AG04450 (cell line): ENCODE measurements at regions of chr6 and their contacts with region 1.

Region 1: DNA sequence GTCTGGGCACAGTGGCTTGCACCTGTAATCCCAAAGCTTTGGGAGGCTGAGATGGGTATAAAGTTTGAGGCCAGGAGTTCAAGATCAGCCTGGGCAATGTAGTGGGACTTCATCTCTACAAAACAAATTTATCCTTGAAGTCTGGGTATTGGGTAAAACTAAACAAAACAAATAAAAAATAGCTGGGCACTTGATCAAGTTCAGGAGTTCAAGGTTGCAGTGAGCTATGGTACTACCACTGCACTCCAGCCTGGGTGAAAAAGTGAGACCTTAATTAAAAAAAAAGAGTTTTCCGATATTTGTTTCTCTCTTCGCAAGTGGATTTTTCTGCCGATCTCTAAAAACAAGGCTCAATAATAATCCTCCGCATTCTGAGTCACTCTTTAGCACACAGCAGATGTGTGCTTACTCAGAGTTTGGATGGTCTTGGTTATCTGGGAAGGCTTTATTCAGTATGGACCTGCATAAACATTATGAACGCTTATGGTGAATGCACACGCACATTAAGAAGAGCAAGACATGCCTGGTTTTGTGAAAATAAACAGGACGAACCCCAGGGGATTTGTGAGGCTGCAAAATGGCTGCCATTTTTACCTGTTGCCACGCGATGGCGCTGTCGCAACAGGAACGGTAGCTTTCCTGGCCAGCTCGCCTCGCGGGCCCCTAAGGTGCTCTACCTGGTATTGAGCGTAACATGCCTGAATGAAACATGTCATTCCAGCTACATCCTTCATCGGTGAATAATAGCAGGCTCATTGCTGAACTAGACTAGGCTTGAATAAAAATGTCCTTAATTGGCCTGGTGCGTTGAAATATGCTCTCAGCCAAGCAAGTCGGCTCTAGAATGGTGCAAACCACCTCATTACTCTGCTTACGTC is 6.0 kb downstream of the OPN5 start:
- DNase-seq: peak; percentile 20
- H3K4me3 ChIP-seq: no peak overlapping the region
- H3K27ac ChIP-seq: no peak overlapping the region
- H3K27me3 ChIP-seq: peaks cover 3% of the 10 kb centered on the region
- CTCF ChIP-seq: peak; percentile 90

Region 2: DNA sequence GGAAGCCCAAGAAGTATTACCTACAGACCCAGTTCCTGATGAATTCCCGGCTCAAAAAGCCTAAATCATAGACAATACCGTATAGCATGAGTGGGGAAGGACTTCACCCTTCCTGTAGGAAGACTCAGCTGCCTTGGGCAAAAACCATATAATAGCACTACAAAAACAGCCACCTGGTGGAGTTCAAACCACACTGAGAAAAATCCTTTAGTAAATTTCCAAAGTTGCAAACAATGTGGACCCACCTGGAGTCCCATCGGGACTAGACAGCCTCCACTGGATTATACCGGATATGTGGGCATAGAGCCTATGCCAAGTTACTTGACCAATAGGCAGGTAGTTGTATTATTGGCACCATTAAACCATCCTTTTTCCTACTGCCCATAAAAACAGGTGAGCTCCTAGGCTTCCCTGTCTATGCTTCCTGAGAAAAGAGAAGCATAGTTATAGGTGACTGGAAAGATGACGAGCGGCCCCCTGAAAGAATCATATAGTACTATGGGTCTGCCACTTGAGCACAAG is 141.2 kb before region 1 on chr6:
- CTCF ChIA-PET with region 1: no interaction called
- POLR2A ChIA-PET with region 1: no interaction called
- DNase-seq: no peak
- H3K4me3 ChIP-seq: no peak overlapping the region
- H3K27ac ChIP-seq: no peak overlapping the region
- H3K27me3 ChIP-seq: no peaks in the 10 kb centered on the region
- CTCF ChIP-seq: no peak

Region 3: DNA sequence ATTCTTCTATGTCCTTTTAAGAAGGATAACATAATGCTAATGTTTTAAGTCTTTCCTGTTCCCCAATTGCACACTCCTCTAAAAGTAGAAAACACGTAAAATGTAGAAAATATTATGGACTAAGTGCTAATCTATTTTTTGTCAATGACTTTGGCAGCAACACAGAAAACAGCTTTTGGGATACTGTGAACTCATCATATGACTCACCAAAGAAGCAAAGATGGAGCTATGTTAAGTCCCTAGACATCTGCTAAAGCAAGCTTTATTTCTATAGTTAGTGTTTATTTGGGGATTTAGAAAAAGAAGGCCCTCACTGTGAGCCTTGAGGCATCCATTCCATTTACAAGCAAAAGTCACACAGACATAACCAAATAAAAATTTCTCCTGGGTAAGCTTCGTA is 17.0 kb after region 1 on chr6:
- CTCF ChIA-PET with region 1: interaction called, 12 read pairs
- POLR2A ChIA-PET with region 1: no interaction called
- DNase-seq: no peak
- H3K4me3 ChIP-seq: no peak overlapping the region
- H3K27ac ChIP-seq: no peak overlapping the region
- H3K27me3 ChIP-seq: no peaks in the 10 kb centered on the region
- CTCF ChIP-seq: no peak

Region 4: GRCh38 chr6:48476257-48476656 is 688.4 kb after region 1 on chr6:
- CTCF ChIA-PET with region 1: interaction called, 10 read pairs
- POLR2A ChIA-PET with region 1: no interaction called
- DNase-seq: no peak
- H3K4me3 ChIP-seq: no peak overlapping the region
- H3K27ac ChIP-seq: no peak overlapping the region
- H3K27me3 ChIP-seq: no peaks in the 10 kb centered on the region
- CTCF ChIP-seq: peak; percentile 49